ENCODE measurements at regions of chr3 and their contacts with region 1.

Region 1: GRCh38 chr3:150787741-150788370 is 24.9 kb upstream of the SIAH2 start:
- DNase-seq: peak; percentile 91
- ATAC-seq: peak; percentile 90
- H3K4me3 Mint-ChIP-seq: no peak overlapping the region
- H3K27ac Mint-ChIP-seq: no peak overlapping the region
- H3K4me1 Mint-ChIP-seq: peaks cover 15% of the 10 kb centered on the region
- H3K27me3 Mint-ChIP-seq: peaks cover 9% of the 10 kb centered on the region
- CTCF ChIP-seq: peak; percentile 93

Region 2: DNA sequence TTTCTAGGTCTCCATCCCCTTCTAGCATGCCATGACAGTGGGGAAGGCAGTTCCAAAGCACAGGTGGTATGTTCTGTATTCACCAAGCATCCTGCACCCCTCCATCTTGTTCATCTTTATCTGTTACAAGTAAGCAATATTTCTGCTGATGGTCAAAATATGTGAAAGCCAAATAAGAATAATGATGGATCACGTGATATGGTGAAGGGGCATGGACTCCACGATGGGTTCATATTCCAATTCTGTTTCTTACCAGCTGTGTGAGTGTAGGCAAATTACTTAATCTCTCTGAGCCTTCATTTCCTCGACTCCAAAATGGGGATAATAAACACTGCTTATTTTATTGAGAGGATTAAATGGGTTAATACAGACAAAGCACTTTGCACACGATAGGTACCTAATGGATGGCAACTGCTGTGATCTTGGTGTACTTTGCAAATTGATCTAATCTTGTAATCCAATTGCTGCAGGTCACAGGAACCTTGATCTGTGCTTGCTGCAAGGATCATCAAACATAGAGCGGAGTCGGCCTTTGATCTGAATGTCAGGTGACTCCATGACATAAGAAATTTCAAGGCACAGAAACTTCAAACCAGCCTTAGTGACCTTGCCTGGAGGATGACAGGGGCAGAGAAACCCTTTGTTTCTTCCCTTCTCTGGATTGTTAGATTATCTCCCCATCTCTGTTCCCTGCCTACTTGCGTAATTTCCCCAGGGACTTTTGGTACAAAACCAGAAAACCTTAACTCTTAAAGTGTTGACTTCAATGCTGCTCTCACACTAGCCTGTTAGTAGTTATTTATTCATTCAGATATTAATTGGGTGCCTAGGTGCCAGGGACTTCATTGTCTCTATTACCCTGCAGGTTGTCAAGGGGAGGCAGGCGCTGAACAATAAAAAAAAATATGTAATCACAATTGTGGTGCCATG is 50.7 kb before region 1 on chr3:
- CTCF ChIA-PET with region 1: interaction called, 10 read pairs
- POLR2A ChIA-PET with region 1: no interaction called
- DNase-seq: no peak
- ATAC-seq: no peak
- H3K4me3 Mint-ChIP-seq: no peak overlapping the region
- H3K27ac Mint-ChIP-seq: no peak overlapping the region
- H3K4me1 Mint-ChIP-seq: peaks cover 25% of the 10 kb centered on the region
- H3K27me3 Mint-ChIP-seq: no peaks in the 10 kb centered on the region
- CTCF ChIP-seq: no peak

Region 3: GRCh38 chr3:150798122-150798626 is 10.3 kb after region 1 on chr3:
- CTCF ChIA-PET with region 1: interaction called, 17 read pairs
- POLR2A ChIA-PET with region 1: no interaction called
- DNase-seq: no peak
- ATAC-seq: peak; percentile 87
- H3K4me3 Mint-ChIP-seq: 0 out of 2 replicates have a peak overlapping the region, but pooled peaks have one; percentile 14
- H3K27ac Mint-ChIP-seq: peak overlapping the region; percentile 86
- H3K4me1 Mint-ChIP-seq: peaks cover 18% of the 10 kb centered on the region
- H3K27me3 Mint-ChIP-seq: peaks cover 7% of the 10 kb centered on the region
- CTCF ChIP-seq: no peak

Region 4: GRCh38 chr3:150830094-150830681 is 42.3 kb after region 1 on chr3:
- CTCF ChIA-PET with region 1: interaction called, 22 read pairs
- POLR2A ChIA-PET with region 1: no interaction called
- DNase-seq: peak; percentile 19
- ATAC-seq: peak; percentile 89
- H3K4me3 Mint-ChIP-seq: no peak overlapping the region
- H3K27ac Mint-ChIP-seq: no peak overlapping the region
- H3K4me1 Mint-ChIP-seq: peaks cover 10% of the 10 kb centered on the region
- H3K27me3 Mint-ChIP-seq: peaks cover 30% of the 10 kb centered on the region
- CTCF ChIP-seq: no peak

Region 5: GRCh38 chr3:150870396-150870795 is 82.5 kb after region 1 on chr3:
- CTCF ChIA-PET with region 1: interaction called, 25 read pairs
- POLR2A ChIA-PET with region 1: no interaction called
- DNase-seq: no peak
- ATAC-seq: no peak
- H3K4me3 Mint-ChIP-seq: no peak overlapping the region
- H3K27ac Mint-ChIP-seq: no peak overlapping the region
- H3K4me1 Mint-ChIP-seq: peaks cover 3% of the 10 kb centered on the region
- H3K27me3 Mint-ChIP-seq: no peaks in the 10 kb centered on the region; the same call in 1 of the 2 replicates
- CTCF ChIP-seq: no peak